H1 (cell line): ENCODE measurements at regions of chr2 and their contacts with region 1.

Region 1: GRCh38 chr2:39593439-39594393 is 72.0 kb upstream of the TMEM178A start:
- DNase-seq: peak in 1 of 2 experiments; percentile 15
- H3K4me3 ChIP-seq: no peak overlapping the region
- H3K27ac ChIP-seq: no peak overlapping the region
- H3K4me1 ChIP-seq: peaks cover 0 to 5% (median 1%) of the 10 kb centered on the region in 4 experiments; a peak in 1 of 7 replicates
- H3K27me3 ChIP-seq: no peaks in the 10 kb centered on the region
- CTCF ChIP-seq: peak; percentile 54 to 88 (median 71)
- EP300 ChIP-seq: no peak
- POLR2A ChIP-seq: no peak
- RAD21 ChIP-seq: peak; percentile 75 to 81

Region 2: DNA sequence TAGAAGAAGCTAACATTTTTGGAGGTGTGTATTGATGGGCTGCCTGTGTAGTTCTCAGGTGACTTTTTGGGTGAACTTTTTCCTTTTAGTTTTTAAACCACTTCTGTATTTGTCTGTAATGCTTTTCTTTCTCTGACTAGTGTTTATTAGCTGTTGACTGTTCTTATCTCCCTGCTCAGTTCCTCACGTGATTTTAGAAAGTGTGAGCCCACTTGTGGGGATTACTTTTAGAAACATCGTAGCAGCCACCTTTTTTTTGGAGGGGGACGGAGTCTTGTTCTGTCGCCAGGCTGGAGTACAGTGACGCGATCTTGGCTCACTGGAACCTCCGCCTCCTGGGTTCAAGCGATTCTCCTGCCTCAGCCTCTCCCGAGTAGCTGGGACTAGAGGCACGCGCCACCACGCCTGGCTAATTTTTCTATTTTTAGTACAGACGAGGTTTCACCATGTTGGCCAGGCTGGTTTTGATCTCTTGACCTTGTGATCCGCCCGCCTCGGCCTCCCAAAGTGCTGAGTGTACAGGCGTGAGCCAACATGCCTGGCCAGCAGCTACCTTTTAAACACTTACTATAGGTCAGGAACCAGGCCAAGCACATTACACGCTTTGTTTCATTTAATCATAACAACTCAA is 340.7 kb before region 1 on chr2:
- CTCF ChIA-PET with region 1: no interaction called
- POLR2A ChIA-PET with region 1: no interaction called
- DNase-seq: no peak
- H3K4me3 ChIP-seq: no peak overlapping the region
- H3K27ac ChIP-seq: no peak overlapping the region
- H3K4me1 ChIP-seq: no peaks in the 10 kb centered on the region
- H3K27me3 ChIP-seq: no peaks in the 10 kb centered on the region; a peak in 1 of 7 replicates
- CTCF ChIP-seq: no peak
- EP300 ChIP-seq: no peak
- POLR2A ChIP-seq: no peak
- RAD21 ChIP-seq: no peak

Region 3: DNA sequence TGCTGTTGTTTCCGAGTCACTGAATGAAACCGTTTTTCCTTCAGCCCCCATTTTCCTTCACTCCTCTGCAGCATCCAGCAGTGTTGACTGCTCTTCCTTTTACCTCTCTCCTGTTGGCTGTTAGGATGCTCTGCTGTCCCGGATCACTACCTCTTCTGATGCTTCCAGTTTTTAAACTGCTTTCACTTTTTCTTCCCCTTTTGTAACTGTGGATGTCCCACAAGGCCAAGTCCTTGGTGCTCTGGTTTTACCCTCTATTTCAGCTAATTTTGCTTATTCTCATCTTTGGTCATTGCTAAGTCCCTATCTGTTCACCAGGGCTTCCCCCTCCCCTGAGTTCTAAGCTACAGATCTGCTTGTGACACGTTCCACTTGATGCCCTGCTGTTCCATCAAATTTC is 117.2 kb before region 1 on chr2:
- CTCF ChIA-PET with region 1: no interaction called
- POLR2A ChIA-PET with region 1: no interaction called
- DNase-seq: no peak
- H3K4me3 ChIP-seq: no peak overlapping the region
- H3K27ac ChIP-seq: no peak overlapping the region
- H3K4me1 ChIP-seq: peaks cover 0 to 3% (median 0%) of the 10 kb centered on the region in 4 experiments; a peak in 2 of 7 replicates
- H3K27me3 ChIP-seq: no peaks in the 10 kb centered on the region
- CTCF ChIP-seq: no peak
- EP300 ChIP-seq: no peak
- POLR2A ChIP-seq: no peak
- RAD21 ChIP-seq: no peak

Region 4: DNA sequence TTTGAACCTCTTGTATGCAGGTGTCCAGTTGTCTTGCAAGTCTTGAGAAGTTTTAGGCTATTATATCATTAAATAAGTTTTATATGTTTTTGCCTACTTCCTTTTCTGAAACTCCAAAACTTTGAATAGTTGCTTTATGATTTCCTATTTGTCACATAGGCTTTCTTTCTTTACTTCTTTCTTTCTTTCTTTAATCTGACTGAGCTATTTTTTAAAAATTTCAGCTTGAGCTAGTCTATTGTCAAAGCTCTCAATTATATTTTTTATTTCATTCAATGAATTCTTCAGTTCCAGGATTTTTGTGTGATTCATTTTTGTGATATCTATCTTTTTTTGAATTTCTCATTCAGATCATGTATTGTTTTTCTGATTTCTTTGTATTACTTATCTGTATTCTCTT is 30.1 kb before region 1 on chr2:
- CTCF ChIA-PET with region 1: interaction called, 11 read pairs
- POLR2A ChIA-PET with region 1: no interaction called
- DNase-seq: no peak
- H3K4me3 ChIP-seq: no peak overlapping the region
- H3K27ac ChIP-seq: no peak overlapping the region
- H3K4me1 ChIP-seq: no peaks in the 10 kb centered on the region
- H3K27me3 ChIP-seq: no peaks in the 10 kb centered on the region; a peak in 1 of 7 replicates
- CTCF ChIP-seq: no peak
- EP300 ChIP-seq: no peak
- POLR2A ChIP-seq: no peak
- RAD21 ChIP-seq: no peak